ENCODE measurements at regions of chr10 and their contacts with region 1.

Region 1: GRCh38 chr10:101139421-101139911 is 8.4 kb downstream of the TLX1 start:
- DNase-seq: no peak
- ATAC-seq: no peak

Region 2: GRCh38 chr10:101095542-101096213 is 43.8 kb before region 1 on chr10:
- intact Hi-C with region 1: loop called (anchors 5 kb)
- DNase-seq: peak; percentile 71
- ATAC-seq: peak; percentile 62

Region 3: GRCh38 chr10:101165736-101166135 is 26.3 kb after region 1 on chr10:
- intact Hi-C with region 1: no loop called
- DNase-seq: no peak
- ATAC-seq: no peak

Region 4: GRCh38 chr10:101311185-101312066 is 172.0 kb after region 1 on chr10:
- intact Hi-C with region 1: no loop called
- DNase-seq: no peak
- ATAC-seq: no peak

Measured in sciatic nerve (tissue), 2 donors.